Mammary epithelial cell (primary cell): ENCODE measurements at regions of chr19 and their contacts with region 1.

Region 1: GRCh38 chr19:46076951-46077816 is 36.4 kb upstream of the IGFL4 start:
- DNase-seq: peak; percentile 69
- H3K4me3 ChIP-seq: peak overlapping the region; percentile 38 to 52 (median 51)
- H3K27ac ChIP-seq: no peak overlapping the region
- H3K4me1 ChIP-seq: peaks cover 27% of the 10 kb centered on the region
- H3K27me3 ChIP-seq: no peaks in the 10 kb centered on the region
- CTCF ChIP-seq: peak; percentile 100

Region 2: GRCh38 chr19:46030812-46031550 is 46.2 kb before region 1 on chr19:
- CTCF ChIA-PET with region 1: interaction called, 10 read pairs
- dilution Hi-C with region 1: no loop called
- in situ Hi-C with region 1: loop called (anchors 5 kb)
- intact Hi-C with region 1: loop called (anchors 1 kb)
- DNase-seq: no peak
- H3K4me3 ChIP-seq: no peak overlapping the region
- H3K27ac ChIP-seq: no peak overlapping the region
- H3K4me1 ChIP-seq: no peaks in the 10 kb centered on the region
- H3K27me3 ChIP-seq: no peaks in the 10 kb centered on the region
- CTCF ChIP-seq: no peak

Region 3: GRCh38 chr19:46133101-46133682 is 56.0 kb after region 1 on chr19:
- CTCF ChIA-PET with region 1: no interaction called
- dilution Hi-C with region 1: no loop called
- in situ Hi-C with region 1: no loop called
- intact Hi-C with region 1: no loop called
- DNase-seq: peak; percentile 92
- H3K4me3 ChIP-seq: peak overlapping the region in 2 of 3 experiments; percentile 30 to 35
- H3K27ac ChIP-seq: peak overlapping the region; percentile 86
- H3K4me1 ChIP-seq: peaks cover 26% of the 10 kb centered on the region
- H3K27me3 ChIP-seq: no peaks in the 10 kb centered on the region
- CTCF ChIP-seq: no peak

Region 4: GRCh38 chr19:46186101-46187100 is 109.2 kb after region 1 on chr19:
- CTCF ChIA-PET with region 1: interaction called, 18 read pairs
- dilution Hi-C with region 1: no loop called
- in situ Hi-C with region 1: loop called (anchors 5 kb)
- intact Hi-C with region 1: loop called (anchors 1 kb)
- DNase-seq: no peak
- H3K4me3 ChIP-seq: no peak overlapping the region
- H3K27ac ChIP-seq: peak overlapping the region; percentile 95
- H3K4me1 ChIP-seq: peaks cover 18% of the 10 kb centered on the region
- H3K27me3 ChIP-seq: no peaks in the 10 kb centered on the region
- CTCF ChIP-seq: no peak

Region 5: DNA sequence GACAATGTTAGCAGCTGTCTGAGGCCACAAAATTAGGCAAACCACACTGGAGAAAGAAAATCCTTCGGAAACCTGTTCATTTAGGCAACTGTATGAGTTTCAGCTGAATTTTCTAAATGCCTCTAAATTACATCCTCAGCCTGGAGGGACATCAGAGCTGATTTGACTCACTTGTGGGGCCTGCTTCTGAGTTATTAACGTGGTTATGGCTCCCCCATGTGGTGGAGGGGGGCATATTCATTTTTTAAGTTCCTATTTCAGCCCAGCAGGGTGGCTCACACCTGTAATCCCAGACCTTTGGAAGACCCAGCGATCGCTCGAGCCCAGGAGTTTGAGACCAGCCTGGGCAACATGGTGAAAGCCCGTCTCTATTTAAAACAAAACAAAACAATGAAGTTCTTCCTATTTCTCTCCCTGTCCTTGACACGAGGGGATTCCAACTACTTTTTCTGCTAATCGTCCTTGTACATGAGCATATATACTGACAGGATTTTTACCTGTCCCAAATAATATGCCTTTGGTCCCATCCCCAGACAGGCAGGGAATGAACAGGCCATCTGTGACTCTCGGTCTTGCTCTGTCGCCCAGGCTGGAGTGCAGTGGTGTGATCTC is 188.1 kb after region 1 on chr19:
- CTCF ChIA-PET with region 1: interaction called, 23 read pairs
- dilution Hi-C with region 1: no loop called
- in situ Hi-C with region 1: loop called (anchors 5 kb)
- intact Hi-C with region 1: loop called (anchors 1 kb)
- DNase-seq: peak; percentile 70
- H3K4me3 ChIP-seq: no peak overlapping the region
- H3K27ac ChIP-seq: no peak overlapping the region
- H3K4me1 ChIP-seq: peaks cover 10% of the 10 kb centered on the region
- H3K27me3 ChIP-seq: peaks cover 4% of the 10 kb centered on the region
- CTCF ChIP-seq: peak; percentile 80 to 84

Region 6: GRCh38 chr19:46404055-46404752 is 327.0 kb after region 1 on chr19:
- CTCF ChIA-PET with region 1: no interaction called
- dilution Hi-C with region 1: no loop called
- in situ Hi-C with region 1: no loop called
- intact Hi-C with region 1: loop called (anchors 2 kb)
- DNase-seq: no peak
- H3K4me3 ChIP-seq: peak overlapping the region; percentile 18 to 49 (median 19)
- H3K27ac ChIP-seq: peak overlapping the region; percentile 14
- H3K4me1 ChIP-seq: peaks cover 29% of the 10 kb centered on the region
- H3K27me3 ChIP-seq: no peaks in the 10 kb centered on the region
- CTCF ChIP-seq: peak in 1 of 2 donors; percentile 17